Cardiac septum (tissue), 1 donor: ENCODE measurements at regions of chr14 and their contacts with region 1.

Region 1: GRCh38 chr14:54805521-54806322 is 96.9 kb downstream of the GCH1 start:
- DNase-seq: peak; percentile 85

Region 2: GRCh38 chr14:54509546-54510501 is 295.9 kb before region 1 on chr14 and contains the start of gene CGRRF1:
- intact Hi-C with region 1: loop called (anchors 5 kb)
- DNase-seq: peak; percentile 98
- total RNA-seq, gene CGRRF1: 17.0 TPM

Region 3: DNA sequence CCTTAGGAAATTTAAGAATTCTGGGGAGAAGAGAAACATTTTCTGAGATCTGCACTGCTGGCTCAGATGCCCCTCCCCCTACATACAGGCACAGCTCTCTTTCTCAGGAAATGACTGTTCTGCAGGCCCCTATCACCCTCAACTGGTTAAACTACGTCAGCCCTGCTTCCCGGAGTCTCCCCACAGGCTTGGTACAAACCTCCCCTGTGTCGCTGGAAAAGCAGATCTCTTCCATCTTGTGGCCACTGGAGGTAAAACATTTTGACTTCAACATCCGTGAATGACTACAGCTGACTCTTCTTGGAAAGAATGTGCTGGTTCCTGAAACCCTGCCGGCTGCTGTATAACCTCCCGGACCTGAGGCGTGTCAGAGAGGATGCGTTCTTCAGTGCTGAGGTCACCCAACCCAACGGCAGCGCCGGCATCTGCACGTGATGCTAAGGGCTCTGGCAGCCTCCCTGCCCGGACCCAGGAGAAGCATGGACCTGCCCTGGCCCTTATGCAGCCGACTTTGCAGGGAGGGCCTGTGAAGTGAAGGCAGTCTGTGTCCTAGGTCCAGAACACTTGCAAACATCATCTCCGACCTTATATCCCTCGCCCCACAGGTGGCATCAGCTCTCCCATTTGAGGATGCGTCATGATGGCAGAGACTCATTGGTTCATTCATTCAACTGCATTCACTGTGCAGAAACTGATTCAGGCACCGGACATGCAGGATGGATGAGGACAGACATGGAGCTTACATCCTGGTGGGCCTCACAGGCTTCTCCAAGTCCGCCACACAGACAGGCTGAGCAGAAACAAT is 32.3 kb before region 1 on chr14:
- intact Hi-C with region 1: loop called (anchors 1 kb)
- DNase-seq: peak; percentile 91

Region 4: DNA sequence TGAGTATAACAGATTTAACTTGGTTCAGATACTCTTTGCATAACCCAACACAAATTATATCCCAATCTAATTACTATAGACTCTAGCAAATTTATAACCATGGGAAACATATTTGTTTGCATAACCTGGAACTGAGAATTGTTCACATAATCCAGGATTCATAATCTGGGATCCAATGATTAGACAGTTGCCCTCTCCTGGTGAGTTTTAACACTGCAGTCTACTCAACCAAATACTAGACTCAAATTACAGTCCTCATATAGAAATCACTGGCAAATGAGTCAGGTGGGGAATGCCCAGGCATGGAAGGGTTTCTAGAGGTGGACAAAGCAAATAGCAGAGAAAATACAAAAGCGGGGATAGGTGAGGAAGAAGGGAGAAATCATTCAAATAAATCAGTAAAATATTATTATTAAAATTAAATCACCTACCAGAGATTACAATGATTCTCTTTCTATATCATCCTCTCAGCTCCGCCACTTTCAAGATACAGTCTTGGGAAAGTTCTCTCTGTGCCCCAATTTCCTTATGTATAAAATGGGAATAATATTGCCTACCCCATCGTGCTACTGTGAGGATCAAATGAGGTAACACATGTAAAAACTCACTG is 87.5 kb after region 1 on chr14:
- intact Hi-C with region 1: loop called (anchors 5 kb)
- DNase-seq: no peak